Activated CD4-positive, alpha-beta memory T cell treated with anti-CD3 and anti-CD28 coated beads for 36 hours (primary cell): ENCODE measurements at regions of chr22 and their contacts with region 1.

Region 1: DNA sequence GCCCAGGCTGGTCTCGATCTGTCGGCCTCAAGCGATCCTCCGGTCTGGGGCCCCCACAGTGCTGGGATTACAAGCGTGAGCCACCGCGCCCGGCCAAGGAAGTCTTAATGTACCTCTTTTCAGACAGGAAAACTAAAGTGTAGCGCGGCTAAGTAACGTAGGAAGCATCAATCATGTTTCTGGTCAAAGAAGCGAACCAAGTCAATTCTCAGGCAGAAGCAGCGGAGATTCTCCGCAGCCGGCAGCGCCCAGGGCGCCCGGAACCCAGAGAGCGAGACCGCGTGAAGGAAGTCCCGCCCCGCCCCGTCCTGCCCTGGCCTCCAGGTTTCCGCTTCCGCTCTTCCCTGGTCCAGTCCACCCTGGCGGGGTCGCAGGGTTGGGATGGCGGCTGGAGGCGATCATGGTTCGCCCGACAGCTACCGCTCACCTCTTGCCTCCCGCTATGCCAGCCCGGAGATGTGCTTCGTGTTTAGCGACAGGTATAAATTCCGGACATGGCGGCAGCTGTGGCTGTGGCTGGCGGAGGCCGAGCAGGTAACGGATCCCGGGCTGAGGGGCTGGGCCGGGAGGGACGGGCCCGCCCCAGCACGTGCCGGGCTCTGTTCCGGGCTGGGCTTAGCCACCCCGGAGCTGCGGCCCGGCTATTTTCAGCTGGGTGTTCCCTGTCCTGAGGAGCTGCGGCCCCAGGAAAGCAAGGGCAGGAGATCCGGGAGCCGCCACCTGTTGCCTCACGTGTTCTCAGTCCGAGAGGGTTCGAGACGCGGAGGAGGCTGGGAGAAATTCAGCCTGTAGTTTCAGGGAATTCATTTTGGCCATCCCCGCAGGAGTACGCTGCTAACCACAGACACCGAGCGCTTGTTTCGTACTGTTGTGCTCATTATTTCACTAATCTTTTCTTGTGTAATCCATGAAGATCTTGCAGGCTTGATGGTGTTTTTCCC is at the start of gene ADSL:
- DNase-seq: peak; percentile 91
- H3K4me3 Mint-ChIP-seq: peak within 1 kb of the TSS; percentile 99
- H3K27ac Mint-ChIP-seq: peak within 1 kb of the TSS; percentile 100
- H3K4me1 Mint-ChIP-seq: peaks cover 49% of the 10 kb centered on the region
- H3K27me3 Mint-ChIP-seq: no peaks in the 10 kb centered on the region
- total RNA-seq, gene ADSL: 143 to 146 TPM

Region 2: DNA sequence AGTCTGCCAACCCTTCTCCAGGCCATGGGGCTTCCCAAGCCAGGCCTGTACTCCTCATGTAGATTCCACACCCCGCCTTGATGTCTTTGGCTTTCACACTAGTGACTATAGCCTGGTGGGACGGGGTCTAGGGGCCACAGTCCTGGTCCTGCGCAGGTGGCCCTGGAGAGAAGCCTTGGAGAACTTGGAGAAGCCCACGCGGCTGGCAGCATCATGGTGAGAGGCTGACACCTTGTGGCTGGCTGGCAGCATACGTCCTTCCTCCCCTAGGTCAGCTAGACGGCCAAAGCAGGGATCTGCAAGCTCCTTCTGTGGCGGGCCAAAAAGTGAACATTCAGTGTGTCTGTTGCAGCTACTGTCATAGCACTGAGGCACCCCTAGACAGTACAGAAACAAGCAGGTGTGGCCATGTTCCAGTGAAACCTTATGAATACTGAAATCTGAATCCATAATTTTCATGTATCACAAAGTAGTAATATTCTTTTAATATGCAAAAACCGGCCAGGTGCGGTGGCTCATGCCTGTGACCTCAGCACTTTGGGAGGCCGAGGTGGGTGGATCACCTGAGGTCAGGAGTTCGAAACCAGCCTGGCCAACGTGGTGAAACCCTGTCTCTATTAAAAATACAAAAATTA is 309.7 kb before region 1 on chr22:
- CTCF ChIA-PET with region 1: interaction called, 25 read pairs
- POLR2A ChIA-PET with region 1: no interaction called
- intact Hi-C with region 1: no loop called
- DNase-seq: peak; percentile 76
- H3K4me3 Mint-ChIP-seq: no peak overlapping the region
- H3K27ac Mint-ChIP-seq: no peak overlapping the region
- H3K4me1 Mint-ChIP-seq: no peaks in the 10 kb centered on the region
- H3K27me3 Mint-ChIP-seq: peaks cover 10% of the 10 kb centered on the region

Region 3: GRCh38 chr22:40055143-40055883 is 291.1 kb before region 1 on chr22:
- CTCF ChIA-PET with region 1: interaction called, 37 read pairs
- POLR2A ChIA-PET with region 1: interaction called, 9 read pairs
- intact Hi-C with region 1: loop called (anchors 5 kb)
- DNase-seq: peak; percentile 44
- H3K4me3 Mint-ChIP-seq: peak overlapping the region; percentile 77
- H3K27ac Mint-ChIP-seq: peak overlapping the region; percentile 97
- H3K4me1 Mint-ChIP-seq: peaks cover 78% of the 10 kb centered on the region
- H3K27me3 Mint-ChIP-seq: no peaks in the 10 kb centered on the region

Region 4: DNA sequence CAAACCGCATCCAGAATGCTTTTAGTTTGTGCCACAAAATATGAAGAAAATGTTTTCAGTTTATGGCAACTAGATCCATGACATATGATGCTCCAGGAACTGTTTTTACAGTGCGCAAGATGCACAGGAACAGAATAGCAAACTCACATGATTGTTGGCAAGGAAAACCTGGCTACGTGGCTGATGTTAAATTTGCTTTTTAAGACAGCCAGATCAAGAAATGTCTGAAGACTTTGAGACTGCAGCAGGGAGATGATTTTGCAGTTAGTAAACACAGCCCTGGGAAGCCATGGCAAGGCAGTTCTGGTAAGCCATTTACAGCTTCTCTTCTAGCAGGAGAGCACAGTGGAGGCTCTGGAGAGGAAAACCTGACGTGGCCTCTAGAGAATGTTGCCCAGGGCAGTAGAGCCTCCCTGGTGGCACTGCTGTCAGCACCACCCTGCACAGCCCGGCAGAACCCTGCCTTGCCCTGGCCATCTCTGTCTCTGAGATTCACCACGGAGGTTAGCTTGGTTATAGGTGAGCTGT is 238.5 kb before region 1 on chr22:
- CTCF ChIA-PET with region 1: interaction called, 20 read pairs
- POLR2A ChIA-PET with region 1: no interaction called
- intact Hi-C with region 1: no loop called
- DNase-seq: peak; percentile 55
- H3K4me3 Mint-ChIP-seq: peak overlapping the region; percentile 58
- H3K27ac Mint-ChIP-seq: peak overlapping the region; percentile 74
- H3K4me1 Mint-ChIP-seq: peaks cover 81% of the 10 kb centered on the region
- H3K27me3 Mint-ChIP-seq: no peaks in the 10 kb centered on the region

Region 5: GRCh38 chr22:40196628-40197360 is 149.7 kb before region 1 on chr22:
- CTCF ChIA-PET with region 1: interaction called, 7 read pairs
- POLR2A ChIA-PET with region 1: interaction called, 5 read pairs
- intact Hi-C with region 1: loop called (anchors 5 kb)
- DNase-seq: peak; percentile 78
- H3K4me3 Mint-ChIP-seq: peak overlapping the region; percentile 53
- H3K27ac Mint-ChIP-seq: peak overlapping the region; percentile 90
- H3K4me1 Mint-ChIP-seq: peaks cover 78% of the 10 kb centered on the region
- H3K27me3 Mint-ChIP-seq: no peaks in the 10 kb centered on the region

Region 6: GRCh38 chr22:40289991-40290459 is 56.4 kb before region 1 on chr22:
- CTCF ChIA-PET with region 1: interaction called, 12 read pairs
- POLR2A ChIA-PET with region 1: interaction called, 3 read pairs
- intact Hi-C with region 1: loop called (anchors 1 kb)
- DNase-seq: peak; percentile 80
- H3K4me3 Mint-ChIP-seq: peak overlapping the region; percentile 51
- H3K27ac Mint-ChIP-seq: peak overlapping the region; percentile 95
- H3K4me1 Mint-ChIP-seq: peaks cover 63% of the 10 kb centered on the region
- H3K27me3 Mint-ChIP-seq: no peaks in the 10 kb centered on the region

Region 7: GRCh38 chr22:40332319-40332781 is 14.1 kb before region 1 on chr22:
- CTCF ChIA-PET with region 1: interaction called, 21 read pairs
- POLR2A ChIA-PET with region 1: interaction called, 11 read pairs
- intact Hi-C with region 1: loop called (anchors 1 kb)
- DNase-seq: peak; percentile 44
- H3K4me3 Mint-ChIP-seq: peak overlapping the region; percentile 49
- H3K27ac Mint-ChIP-seq: peak overlapping the region; percentile 80
- H3K4me1 Mint-ChIP-seq: peaks cover 91% of the 10 kb centered on the region
- H3K27me3 Mint-ChIP-seq: no peaks in the 10 kb centered on the region